Heart right ventricle (tissue), 16 donors: ENCODE measurements at regions of chr16 and their contacts with region 1.

Region 1: GRCh38 chr16:49776085-49776595 is 79.8 kb downstream of the ZNF423 start:
- DNase-seq: peak; percentile 60 to 62
- ATAC-seq: peak; percentile 80 to 92 (median 87)
- H3K4me3 ChIP-seq: peak overlapping the region in 4 of 10 donors; percentile 16 to 24 (median 20)
- H3K27ac ChIP-seq: peak overlapping the region in 9 of 10 donors; percentile 36 to 78 (median 70)
- H3K4me1 ChIP-seq: peaks cover 8 to 72% (median 57%) of the 10 kb centered on the region in 9 donors
- H3K27me3 ChIP-seq: no peaks in the 10 kb centered on the region
- CTCF ChIP-seq: no peak

Region 2: DNA sequence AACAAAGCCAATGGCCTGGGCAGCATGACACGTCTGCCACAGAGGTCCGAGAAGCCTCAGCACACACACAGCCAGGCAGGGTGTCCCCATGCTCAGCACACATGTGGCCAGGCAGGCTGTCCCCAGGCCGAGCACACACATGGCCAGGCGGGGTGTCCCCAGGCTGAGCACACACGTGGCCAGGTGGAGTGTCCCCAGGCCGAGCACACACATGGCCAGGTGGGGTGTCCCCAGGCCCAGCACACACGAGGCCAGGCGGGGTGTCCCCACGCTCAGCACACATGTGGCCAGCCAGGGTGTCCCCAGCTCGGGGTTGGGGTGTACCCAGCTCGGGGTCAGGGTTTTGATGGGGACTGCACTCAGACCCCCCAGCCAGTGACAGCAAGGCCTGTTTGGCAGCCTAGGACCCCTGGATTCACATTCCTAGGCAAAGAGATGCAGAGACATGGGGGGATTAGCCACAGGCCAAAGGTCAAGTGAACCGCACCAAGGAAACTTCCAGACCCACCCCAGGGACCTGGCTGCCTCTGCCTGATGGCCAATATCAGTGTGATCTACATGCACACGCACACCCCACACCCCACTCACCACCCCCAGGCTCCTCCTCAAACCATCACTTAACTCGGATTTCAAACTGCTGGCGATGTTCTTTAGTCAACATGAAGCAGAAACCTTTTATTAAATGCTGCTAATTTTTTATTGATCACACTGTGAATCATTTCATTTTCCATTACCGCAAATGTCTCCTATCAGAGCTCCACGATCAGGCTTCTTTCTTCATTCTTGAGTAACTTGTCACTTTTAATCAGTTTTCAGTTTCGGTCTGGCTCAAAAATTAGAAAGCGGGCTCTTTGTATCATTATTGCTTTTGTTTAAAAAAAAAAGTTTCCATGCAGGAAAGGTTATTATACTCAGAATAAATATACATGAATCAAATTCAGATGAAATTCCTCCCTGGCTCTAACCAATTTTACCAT is 31.6 kb before region 1 on chr16:
- intact Hi-C with region 1: no loop called
- DNase-seq: no peak
- ATAC-seq: peak in 3 of 8 donors; percentile 16 to 29 (median 27)
- H3K4me3 ChIP-seq: no peak overlapping the region
- H3K27ac ChIP-seq: no peak overlapping the region
- H3K4me1 ChIP-seq: peaks cover 0 to 11% (median 4%) of the 10 kb centered on the region in 9 donors
- H3K27me3 ChIP-seq: peaks cover 0 to 21% (median 0%) of the 10 kb centered on the region in 7 donors
- CTCF ChIP-seq: no peak

Region 3: GRCh38 chr16:49755313-49755620 is 20.9 kb before region 1 on chr16:
- intact Hi-C with region 1: loop called in 1 of 10 experiments (anchors 2 kb)
- DNase-seq: peak in 1 of 2 donors; percentile 30
- ATAC-seq: peak; percentile 51 to 89 (median 77)
- H3K4me3 ChIP-seq: peak overlapping the region in 9 of 10 donors; percentile 30 to 56 (median 44)
- H3K27ac ChIP-seq: peak overlapping the region; percentile 43 to 90 (median 84)
- H3K4me1 ChIP-seq: peaks cover 2 to 51% (median 40%) of the 10 kb centered on the region in 9 donors
- H3K27me3 ChIP-seq: peaks cover 0 to 13% (median 0%) of the 10 kb centered on the region in 7 donors
- CTCF ChIP-seq: peak; percentile 20 to 74 (median 51)

Region 4: DNA sequence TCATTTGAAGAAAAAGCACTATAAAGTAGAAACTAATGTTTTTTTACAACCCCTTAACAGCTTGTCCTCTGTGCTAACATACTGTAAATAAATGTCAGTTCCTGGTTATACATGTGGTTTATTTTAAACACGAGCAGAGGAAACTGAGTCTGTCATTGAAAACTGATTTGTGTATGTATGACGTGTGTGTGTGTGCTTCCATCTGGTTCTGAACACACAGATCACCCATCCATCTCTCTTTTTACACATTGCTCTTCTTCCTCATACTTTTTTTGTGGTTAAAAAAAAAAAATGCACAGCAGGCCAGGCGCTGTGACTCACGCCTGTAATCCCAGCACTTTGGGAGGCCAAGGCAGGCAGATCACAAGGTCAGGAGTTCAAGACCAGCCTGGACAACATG is 30.3 kb after region 1 on chr16:
- intact Hi-C with region 1: no loop called
- DNase-seq: no peak
- ATAC-seq: no peak
- H3K4me3 ChIP-seq: no peak overlapping the region
- H3K27ac ChIP-seq: no peak overlapping the region
- H3K4me1 ChIP-seq: peaks cover 0 to 16% (median 7%) of the 10 kb centered on the region in 9 donors
- H3K27me3 ChIP-seq: no peaks in the 10 kb centered on the region
- CTCF ChIP-seq: no peak

Region 5: GRCh38 chr16:49816875-49817274 is 40.7 kb after region 1 on chr16:
- intact Hi-C with region 1: loop called in 1 of 10 experiments (anchors 5 kb)
- DNase-seq: no peak
- ATAC-seq: peak in 5 of 8 donors; percentile 52 to 83 (median 71)
- H3K4me3 ChIP-seq: no peak overlapping the region
- H3K27ac ChIP-seq: peak overlapping the region in 2 of 10 donors; percentile 21 to 39
- H3K4me1 ChIP-seq: peaks cover 0 to 55% (median 22%) of the 10 kb centered on the region in 9 donors
- H3K27me3 ChIP-seq: no peaks in the 10 kb centered on the region
- CTCF ChIP-seq: no peak

Region 6: DNA sequence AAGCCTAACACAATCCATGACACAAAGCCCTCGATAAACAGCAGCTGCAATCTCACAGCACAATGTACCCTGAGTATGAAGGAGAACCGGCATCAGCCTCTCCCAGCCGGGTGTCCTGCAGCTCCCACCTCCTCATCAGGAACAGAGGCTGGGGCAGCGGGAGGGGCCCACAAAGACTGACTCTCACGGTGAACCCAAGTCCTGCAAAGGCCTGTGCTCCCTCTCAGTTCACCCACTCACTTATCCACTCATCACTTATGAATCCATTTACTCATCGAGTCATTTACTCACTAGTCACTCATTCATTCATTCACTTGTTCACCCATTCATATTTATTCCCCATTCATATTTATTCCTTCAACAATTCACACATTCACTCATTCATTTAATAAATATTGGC is 68.2 kb after region 1 on chr16:
- intact Hi-C with region 1: loop called in 1 of 10 experiments (anchors 10 kb)
- DNase-seq: no peak
- ATAC-seq: no peak
- H3K4me3 ChIP-seq: no peak overlapping the region
- H3K27ac ChIP-seq: no peak overlapping the region
- H3K4me1 ChIP-seq: peaks cover 0 to 21% (median 5%) of the 10 kb centered on the region in 9 donors
- H3K27me3 ChIP-seq: peaks cover 0 to 6% (median 0%) of the 10 kb centered on the region in 7 donors
- CTCF ChIP-seq: no peak

Region 7: DNA sequence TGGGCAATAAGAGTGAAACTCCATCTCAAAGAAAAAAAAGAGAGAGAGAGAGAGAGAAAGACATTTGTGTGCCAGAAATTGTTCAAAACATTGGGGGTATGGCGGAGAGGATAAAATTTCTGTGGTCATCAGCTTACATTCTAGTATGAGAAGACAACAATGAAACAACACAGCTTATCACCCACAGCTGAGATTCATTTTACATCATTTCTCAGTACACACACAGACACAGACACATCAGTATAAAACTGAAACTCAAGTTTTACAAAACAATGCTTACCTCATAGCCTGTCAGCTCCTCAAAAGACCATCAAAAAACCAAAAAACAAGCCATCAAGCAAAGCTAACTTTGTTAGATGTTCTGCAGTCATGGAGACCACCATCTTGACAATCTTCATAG is 217.4 kb after region 1 on chr16:
- intact Hi-C with region 1: no loop called
- DNase-seq: no peak
- ATAC-seq: no peak
- H3K4me3 ChIP-seq: no peak overlapping the region
- H3K27ac ChIP-seq: no peak overlapping the region
- H3K4me1 ChIP-seq: no peaks in the 10 kb centered on the region
- H3K27me3 ChIP-seq: peaks cover 0 to 10% (median 0%) of the 10 kb centered on the region in 7 donors
- CTCF ChIP-seq: no peak